Mammary epithelial cell (primary cell): ENCODE measurements at regions of chr19 and their contacts with region 1.

Region 1: DNA sequence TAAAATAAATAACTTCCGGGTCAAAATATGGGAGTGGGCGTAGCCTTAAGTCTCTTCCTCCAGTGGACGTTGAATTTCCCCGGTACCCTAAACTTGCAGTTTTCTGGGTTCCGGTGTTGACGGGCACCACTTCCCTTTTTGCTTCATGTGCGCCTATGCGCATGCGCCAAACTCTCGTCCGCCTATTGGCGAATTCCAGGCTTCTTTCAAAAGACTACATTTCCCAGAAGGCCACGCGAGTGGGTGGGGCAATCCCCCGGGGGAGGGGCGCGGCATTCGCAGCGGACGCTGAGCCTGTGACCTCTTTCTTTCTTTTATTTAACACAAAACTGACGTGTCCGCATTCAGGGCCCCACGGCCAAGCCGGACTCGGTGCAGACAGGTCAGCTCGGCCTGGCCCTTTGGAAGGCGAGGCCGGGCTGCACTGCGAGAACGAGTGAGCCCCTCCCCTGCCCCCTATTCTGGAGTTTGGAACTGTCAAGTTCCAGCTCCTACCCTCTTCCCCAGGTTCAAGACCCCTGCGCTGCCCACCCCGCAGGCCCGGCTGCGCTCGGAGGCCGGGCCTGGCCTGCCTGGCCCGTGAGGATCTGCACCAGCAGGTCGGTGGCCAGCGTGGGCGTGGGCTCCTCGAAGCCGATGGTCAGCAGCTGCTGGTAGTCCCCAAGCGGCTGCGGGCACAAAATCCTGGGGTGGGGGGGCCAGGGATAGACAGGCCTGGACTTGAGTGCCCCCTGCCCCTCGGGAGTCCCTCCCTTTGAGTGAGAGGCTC is 4.1 kb downstream of the C19orf67 start:
- DNase-seq: peak; percentile 98
- H3K4me3 ChIP-seq: peak overlapping the region; percentile 68 to 95 (median 72)
- H3K27ac ChIP-seq: peak overlapping the region; percentile 79
- H3K4me1 ChIP-seq: peaks cover 9% of the 10 kb centered on the region
- H3K27me3 ChIP-seq: no peaks in the 10 kb centered on the region
- CTCF ChIP-seq: no peak

Region 2: GRCh38 chr19:13784731-13785452 is 296.6 kb before region 1 on chr19:
- CTCF ChIA-PET with region 1: no interaction called
- dilution Hi-C with region 1: no loop called
- in situ Hi-C with region 1: no loop called
- intact Hi-C with region 1: loop called (anchors 5 kb)
- DNase-seq: peak; percentile 37
- H3K4me3 ChIP-seq: no peak overlapping the region
- H3K27ac ChIP-seq: no peak overlapping the region
- H3K4me1 ChIP-seq: peaks cover 19% of the 10 kb centered on the region
- H3K27me3 ChIP-seq: no peaks in the 10 kb centered on the region
- CTCF ChIP-seq: peak; percentile 16 to 80

Region 3: GRCh38 chr19:13913352-13913751 is 168.2 kb before region 1 on chr19:
- CTCF ChIA-PET with region 1: no interaction called
- dilution Hi-C with region 1: loop called (anchors 5 kb)
- in situ Hi-C with region 1: no loop called
- intact Hi-C with region 1: no loop called
- DNase-seq: no peak
- H3K4me3 ChIP-seq: no peak overlapping the region
- H3K27ac ChIP-seq: no peak overlapping the region
- H3K4me1 ChIP-seq: no peaks in the 10 kb centered on the region
- H3K27me3 ChIP-seq: no peaks in the 10 kb centered on the region
- CTCF ChIP-seq: no peak

Region 4: GRCh38 chr19:13995017-13995728 is 86.3 kb before region 1 on chr19:
- CTCF ChIA-PET with region 1: no interaction called
- dilution Hi-C with region 1: loop called (anchors 5 kb)
- in situ Hi-C with region 1: no loop called
- intact Hi-C with region 1: no loop called
- DNase-seq: no peak
- H3K4me3 ChIP-seq: no peak overlapping the region
- H3K27ac ChIP-seq: no peak overlapping the region
- H3K4me1 ChIP-seq: no peaks in the 10 kb centered on the region
- H3K27me3 ChIP-seq: no peaks in the 10 kb centered on the region
- CTCF ChIP-seq: no peak

Region 5: DNA sequence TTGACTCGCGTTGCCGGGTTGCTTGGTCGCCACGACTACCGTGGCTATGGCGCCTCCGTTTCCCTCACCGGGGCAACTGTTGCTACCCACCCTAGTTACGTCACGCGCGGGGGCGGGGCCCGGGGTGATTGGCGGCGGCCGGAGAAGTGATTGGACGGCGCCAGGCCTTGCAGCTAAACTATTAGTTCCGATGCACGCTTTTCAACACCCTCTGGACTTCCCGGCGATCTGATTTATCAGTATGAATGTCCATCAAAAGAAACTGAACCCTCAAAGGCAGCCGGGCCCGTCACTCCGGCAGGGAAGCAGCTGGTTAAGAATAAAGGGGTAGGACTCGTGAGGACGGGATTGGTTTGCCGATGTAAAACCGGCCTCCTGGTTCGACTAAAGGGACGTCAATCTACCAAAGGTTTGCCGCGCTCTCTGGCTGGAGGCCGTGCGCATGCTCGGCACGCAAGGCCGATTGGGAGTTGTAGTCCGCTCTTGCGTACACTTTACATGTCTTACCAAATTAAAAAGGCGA is 75.2 kb before region 1 on chr19 and contains the start of gene RFX1:
- CTCF ChIA-PET with region 1: no interaction called
- dilution Hi-C with region 1: no loop called
- in situ Hi-C with region 1: no loop called
- intact Hi-C with region 1: loop called (anchors 2 kb)
- DNase-seq: peak; percentile 100
- H3K4me3 ChIP-seq: peak within 1 kb of the TSS; percentile 72 to 96 (median 73)
- H3K27ac ChIP-seq: peak within 1 kb of the TSS; percentile 99
- H3K4me1 ChIP-seq: peaks cover 16% of the 10 kb centered on the region
- H3K27me3 ChIP-seq: no peaks in the 10 kb centered on the region
- CTCF ChIP-seq: no peak
- total RNA-seq, gene RFX1: 2.7 to 12.0 TPM

Region 6: GRCh38 chr19:14023404-14024235 is 57.9 kb before region 1 on chr19:
- CTCF ChIA-PET with region 1: no interaction called
- dilution Hi-C with region 1: loop called (anchors 5 kb)
- in situ Hi-C with region 1: no loop called
- intact Hi-C with region 1: no loop called
- DNase-seq: peak; percentile 34
- H3K4me3 ChIP-seq: no peak overlapping the region
- H3K27ac ChIP-seq: no peak overlapping the region
- H3K4me1 ChIP-seq: no peaks in the 10 kb centered on the region
- H3K27me3 ChIP-seq: no peaks in the 10 kb centered on the region
- CTCF ChIP-seq: peak; percentile 50 to 51